ENCODE measurements at regions of chr17 and their contacts with region 1.

Region 1: GRCh38 chr17:29111816-29112499 is 68.2 kb downstream of the MYO18A start:
- DNase-seq: peak in 4 of 5 donors; percentile 72 to 86 (median 82)
- H3K4me3 ChIP-seq: no peak overlapping the region
- H3K27ac ChIP-seq: peak overlapping the region in 1 of 2 donors; percentile 23
- H3K4me1 ChIP-seq: peaks cover 0 to 19% (median 11%) of the 10 kb centered on the region in 3 donors
- H3K27me3 ChIP-seq: no peaks in the 10 kb centered on the region
- CTCF ChIP-seq: peak; percentile 90

Region 2: GRCh38 chr17:28925912-28926365 is 186.0 kb before region 1 on chr17:
- intact Hi-C with region 1: no loop called
- DNase-seq: peak in 1 of 5 donors; percentile 37
- H3K4me3 ChIP-seq: no peak overlapping the region
- H3K27ac ChIP-seq: peak overlapping the region; percentile 29 to 83
- H3K4me1 ChIP-seq: peaks cover 0 to 8% (median 4%) of the 10 kb centered on the region in 3 donors
- H3K27me3 ChIP-seq: no peaks in the 10 kb centered on the region
- CTCF ChIP-seq: no peak

Region 3: DNA sequence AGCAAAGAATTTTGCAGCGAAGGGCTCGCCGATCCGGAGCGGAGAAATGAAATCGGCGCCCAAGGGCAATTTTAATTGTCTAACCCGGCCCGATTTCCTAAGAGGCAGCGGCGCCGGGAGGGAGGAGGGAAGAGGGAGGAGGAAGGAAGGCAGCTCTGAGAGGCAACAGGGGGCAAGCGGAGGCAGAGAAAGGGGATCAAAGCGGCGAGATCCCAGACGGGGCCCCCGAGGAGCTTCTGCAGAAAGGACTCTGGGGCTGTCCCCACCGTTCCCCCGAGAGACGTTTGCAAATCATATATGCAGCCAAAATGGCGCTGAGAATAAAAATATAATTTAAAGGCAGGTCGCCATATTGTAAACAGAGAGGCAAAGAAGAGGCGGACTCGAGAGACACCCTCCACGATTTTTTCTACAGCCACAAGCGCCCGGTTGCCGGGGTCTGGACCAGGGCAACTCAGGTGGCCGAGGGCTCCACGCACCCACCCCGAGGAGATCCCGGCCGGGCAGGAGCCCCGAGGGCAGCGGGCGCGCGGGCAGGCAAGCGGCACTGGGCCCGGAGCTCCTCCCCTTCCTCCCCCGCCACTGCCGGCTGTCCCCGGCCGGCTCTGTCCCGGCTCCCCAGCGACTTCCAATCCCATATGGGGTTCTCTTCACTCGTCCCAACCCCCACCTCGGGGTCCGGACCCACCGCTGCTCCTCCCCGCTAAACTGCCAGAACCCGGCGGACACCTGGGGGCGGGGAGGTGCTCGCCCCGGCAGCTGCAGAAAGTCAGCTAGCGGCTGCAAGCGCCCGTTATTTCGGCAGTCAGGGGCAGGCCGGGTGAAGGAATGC is 162.6 kb before region 1 on chr17:
- intact Hi-C with region 1: no loop called
- DNase-seq: peak; percentile 72 to 92 (median 86)
- H3K4me3 ChIP-seq: peak overlapping the region; percentile 75 to 86 (median 76)
- H3K27ac ChIP-seq: peak overlapping the region; percentile 85 to 88
- H3K4me1 ChIP-seq: peaks cover 5 to 28% (median 27%) of the 10 kb centered on the region in 3 donors
- H3K27me3 ChIP-seq: no peaks in the 10 kb centered on the region
- CTCF ChIP-seq: no peak

Region 4: GRCh38 chr17:28967221-28968140 is 144.5 kb before region 1 on chr17:
- intact Hi-C with region 1: loop called (anchors 5 kb)
- DNase-seq: peak in 4 of 5 donors; percentile 31 to 65 (median 50)
- H3K4me3 ChIP-seq: no peak overlapping the region
- H3K27ac ChIP-seq: no peak overlapping the region
- H3K4me1 ChIP-seq: peaks cover 6 to 10% (median 6%) of the 10 kb centered on the region in 3 donors
- H3K27me3 ChIP-seq: no peaks in the 10 kb centered on the region
- CTCF ChIP-seq: no peak

Region 5: DNA sequence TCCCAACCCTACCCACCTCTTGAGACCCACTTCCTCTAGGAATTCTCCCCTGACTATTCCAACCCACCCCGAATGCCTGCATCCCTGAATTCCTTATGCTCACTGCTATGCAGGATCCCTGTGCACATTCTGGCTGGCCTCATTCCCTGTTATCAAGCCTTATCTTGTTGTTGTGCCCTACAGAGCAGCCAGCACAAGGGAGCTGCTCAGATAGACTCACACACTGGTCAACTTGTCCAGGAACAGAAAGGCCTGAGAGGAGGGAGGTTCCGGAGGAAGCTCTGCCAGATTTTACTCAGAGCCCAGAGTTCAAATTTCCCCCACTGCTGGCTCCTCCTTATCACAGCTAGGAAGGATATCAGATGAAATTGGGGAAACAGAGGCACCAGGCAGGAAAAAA is 93.1 kb after region 1 on chr17:
- intact Hi-C with region 1: no loop called
- DNase-seq: no peak
- H3K4me3 ChIP-seq: no peak overlapping the region
- H3K27ac ChIP-seq: no peak overlapping the region
- H3K4me1 ChIP-seq: no peaks in the 10 kb centered on the region
- H3K27me3 ChIP-seq: no peaks in the 10 kb centered on the region
- CTCF ChIP-seq: no peak

Region 6: GRCh38 chr17:29883497-29883896 is 771.5 kb after region 1 on chr17:
- intact Hi-C with region 1: no loop called
- DNase-seq: no peak
- H3K4me3 ChIP-seq: no peak overlapping the region
- H3K27ac ChIP-seq: no peak overlapping the region
- H3K4me1 ChIP-seq: no peaks in the 10 kb centered on the region
- H3K27me3 ChIP-seq: no peaks in the 10 kb centered on the region
- CTCF ChIP-seq: no peak